Sigmoid colon (tissue), 7 donors: ENCODE measurements at regions of chr5 and their contacts with region 1.

Region 1: DNA sequence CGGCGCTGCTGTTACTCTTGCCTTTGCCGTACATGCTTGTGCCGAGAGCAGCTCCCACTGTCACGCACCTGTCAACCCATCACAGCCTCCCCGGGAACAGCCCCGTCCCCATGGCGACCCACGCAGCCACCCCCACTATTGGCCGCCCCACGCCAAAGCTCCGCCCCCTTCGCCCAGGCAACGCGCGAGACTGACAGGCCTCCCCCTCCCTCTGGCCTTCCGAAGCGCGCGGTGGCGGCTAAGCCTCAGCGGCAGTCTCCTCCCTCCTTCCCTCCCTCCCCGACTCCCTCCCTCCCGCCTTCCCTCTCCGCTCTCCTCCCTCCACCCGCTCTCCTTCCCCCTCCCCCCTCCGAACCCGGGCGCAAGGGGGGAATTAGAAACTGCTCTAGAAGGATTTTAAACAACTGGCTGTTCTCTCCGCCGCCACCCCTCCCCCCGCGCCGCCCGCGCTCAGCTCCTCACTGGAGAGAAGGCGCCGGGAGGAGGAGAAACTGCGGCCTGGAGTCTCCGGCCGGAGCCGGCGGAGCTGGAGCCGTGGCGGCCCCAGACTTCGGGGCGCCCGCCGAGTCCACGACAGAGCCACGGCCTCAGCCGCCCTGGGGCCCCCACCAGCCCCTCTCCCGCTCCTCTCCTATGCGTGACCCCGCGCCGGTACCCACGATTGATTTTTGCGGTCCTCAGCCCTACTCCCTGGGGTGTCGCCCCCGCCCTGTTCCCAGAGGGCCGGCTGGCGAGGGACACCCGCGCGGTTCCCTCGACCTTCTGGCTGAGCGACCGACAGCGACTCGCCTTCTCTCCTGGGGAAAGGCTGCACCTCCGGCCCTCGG is at the start of gene SSBP2:
- DNase-seq: peak; percentile 100
- H3K4me3 ChIP-seq: peak within 1 kb of the TSS; percentile 82 to 95 (median 86)
- H3K27ac ChIP-seq: peak within 1 kb of the TSS; percentile 95 to 100 (median 98)
- H3K4me1 ChIP-seq: peaks cover 0 to 62% (median 44%) of the 10 kb centered on the region in 4 donors
- H3K27me3 ChIP-seq: no peaks in the 10 kb centered on the region
- CTCF ChIP-seq: no peak
- EP300 ChIP-seq: peak in 3 of 4 donors; percentile 73 to 90 (median 80)
- POLR2A ChIP-seq: peak; percentile 64 to 67
- total RNA-seq, gene SSBP2: 68.7 to 89.2 (median 84.6) TPM

Region 2: DNA sequence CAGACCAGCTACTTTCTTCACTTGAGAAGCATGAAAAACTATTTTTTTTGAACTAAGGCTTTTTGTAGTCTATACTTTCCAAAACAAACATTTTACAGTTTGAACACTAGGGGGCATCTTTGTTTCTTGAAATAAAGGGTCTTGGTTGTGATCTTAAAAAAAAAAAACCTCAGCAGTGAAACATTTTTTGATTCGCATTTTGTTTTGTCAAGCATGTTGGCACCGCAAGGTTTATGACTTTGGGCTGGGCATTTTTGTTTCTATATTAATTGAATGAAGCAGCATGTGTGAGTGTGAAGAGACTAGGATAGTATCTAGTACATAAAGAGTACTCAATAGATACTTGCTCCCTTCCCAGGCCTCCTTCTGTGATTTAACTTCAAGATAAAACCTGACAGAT is 325.7 kb before region 1 on chr5:
- intact Hi-C with region 1: loop called (anchors 5 kb)
- DNase-seq: no peak
- H3K4me3 ChIP-seq: no peak overlapping the region
- H3K27ac ChIP-seq: peak overlapping the region in 2 of 4 donors; percentile 35 to 52
- H3K4me1 ChIP-seq: peaks cover 0 to 38% (median 25%) of the 10 kb centered on the region in 4 donors
- H3K27me3 ChIP-seq: no peaks in the 10 kb centered on the region
- CTCF ChIP-seq: peak; percentile 37 to 68 (median 44)
- EP300 ChIP-seq: no peak
- POLR2A ChIP-seq: no peak

Region 3: GRCh38 chr5:81506900-81507588 is 244.2 kb before region 1 on chr5:
- intact Hi-C with region 1: loop called (anchors 2 kb)
- DNase-seq: peak; percentile 76
- H3K4me3 ChIP-seq: no peak overlapping the region
- H3K27ac ChIP-seq: peak overlapping the region in 2 of 4 donors; percentile 20 to 63
- H3K4me1 ChIP-seq: peaks cover 0 to 22% (median 3%) of the 10 kb centered on the region in 4 donors
- H3K27me3 ChIP-seq: no peaks in the 10 kb centered on the region
- CTCF ChIP-seq: peak; percentile 71 to 87 (median 78)
- EP300 ChIP-seq: no peak
- POLR2A ChIP-seq: no peak

Region 4: GRCh38 chr5:81787474-81788242 is 36.4 kb after region 1 on chr5:
- intact Hi-C with region 1: loop called (anchors 1 kb)
- DNase-seq: peak; percentile 89
- H3K4me3 ChIP-seq: peak overlapping the region in 2 of 4 donors; percentile 0 to 10
- H3K27ac ChIP-seq: peak overlapping the region; percentile 15 to 65 (median 62)
- H3K4me1 ChIP-seq: peaks cover 0 to 37% (median 30%) of the 10 kb centered on the region in 4 donors
- H3K27me3 ChIP-seq: no peaks in the 10 kb centered on the region
- CTCF ChIP-seq: no peak
- EP300 ChIP-seq: no peak
- POLR2A ChIP-seq: no peak

Region 5: DNA sequence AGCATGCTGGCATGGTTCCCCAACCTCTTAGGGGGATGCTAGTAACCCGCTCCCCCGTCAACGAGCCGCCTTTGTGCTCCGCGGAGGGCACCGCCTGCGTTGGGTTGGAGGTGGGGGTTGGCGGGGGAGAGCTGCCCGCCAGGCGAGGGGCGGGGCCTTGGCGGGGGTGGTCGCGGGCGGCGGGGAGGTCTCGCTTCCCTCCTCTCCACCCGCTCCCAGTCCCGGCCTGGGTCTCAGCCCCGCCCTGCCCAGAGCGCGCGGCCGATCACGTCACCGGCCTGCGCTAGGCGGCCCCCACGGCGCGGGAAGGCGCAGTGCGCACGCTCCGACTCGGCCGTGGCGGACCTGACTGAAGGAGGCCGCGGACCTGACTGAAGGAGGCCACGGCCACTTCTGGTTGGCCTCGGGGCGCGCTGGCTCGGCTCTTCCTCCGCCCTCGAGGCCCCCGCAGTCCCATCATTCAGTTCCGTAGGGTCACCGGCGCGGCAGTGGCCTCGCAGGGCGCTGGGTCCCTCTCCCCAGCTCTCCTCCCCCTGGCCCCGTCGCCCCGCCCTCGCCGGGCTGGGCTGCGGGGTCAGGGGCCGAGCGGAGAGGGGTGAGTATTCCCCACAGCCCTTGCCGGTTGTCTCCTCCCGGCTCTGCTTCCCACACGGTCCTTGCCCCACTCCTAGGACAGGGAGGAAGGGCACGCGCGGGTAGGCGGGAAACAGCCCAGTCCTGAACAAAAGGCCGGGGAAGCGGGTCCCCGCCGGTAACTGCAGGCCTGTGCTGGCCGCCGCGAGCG is 220.7 kb after region 1 on chr5 and contains the start of gene ATG10:
- intact Hi-C with region 1: loop called (anchors 2 kb)
- DNase-seq: peak; percentile 96
- H3K4me3 ChIP-seq: peak within 1 kb of the TSS; percentile 69 to 87 (median 70)
- H3K27ac ChIP-seq: peak within 1 kb of the TSS; percentile 95 to 99 (median 98)
- H3K4me1 ChIP-seq: peaks cover 0 to 19% (median 6%) of the 10 kb centered on the region in 4 donors
- H3K27me3 ChIP-seq: no peaks in the 10 kb centered on the region
- CTCF ChIP-seq: no peak
- EP300 ChIP-seq: no peak
- POLR2A ChIP-seq: peak; percentile 88 to 93
- total RNA-seq, gene ATG10: 6.4 to 13.2 (median 10.7) TPM